HAP-1 (cell line): ENCODE measurements at regions of chr3 and their contacts with region 1.

Region 1: DNA sequence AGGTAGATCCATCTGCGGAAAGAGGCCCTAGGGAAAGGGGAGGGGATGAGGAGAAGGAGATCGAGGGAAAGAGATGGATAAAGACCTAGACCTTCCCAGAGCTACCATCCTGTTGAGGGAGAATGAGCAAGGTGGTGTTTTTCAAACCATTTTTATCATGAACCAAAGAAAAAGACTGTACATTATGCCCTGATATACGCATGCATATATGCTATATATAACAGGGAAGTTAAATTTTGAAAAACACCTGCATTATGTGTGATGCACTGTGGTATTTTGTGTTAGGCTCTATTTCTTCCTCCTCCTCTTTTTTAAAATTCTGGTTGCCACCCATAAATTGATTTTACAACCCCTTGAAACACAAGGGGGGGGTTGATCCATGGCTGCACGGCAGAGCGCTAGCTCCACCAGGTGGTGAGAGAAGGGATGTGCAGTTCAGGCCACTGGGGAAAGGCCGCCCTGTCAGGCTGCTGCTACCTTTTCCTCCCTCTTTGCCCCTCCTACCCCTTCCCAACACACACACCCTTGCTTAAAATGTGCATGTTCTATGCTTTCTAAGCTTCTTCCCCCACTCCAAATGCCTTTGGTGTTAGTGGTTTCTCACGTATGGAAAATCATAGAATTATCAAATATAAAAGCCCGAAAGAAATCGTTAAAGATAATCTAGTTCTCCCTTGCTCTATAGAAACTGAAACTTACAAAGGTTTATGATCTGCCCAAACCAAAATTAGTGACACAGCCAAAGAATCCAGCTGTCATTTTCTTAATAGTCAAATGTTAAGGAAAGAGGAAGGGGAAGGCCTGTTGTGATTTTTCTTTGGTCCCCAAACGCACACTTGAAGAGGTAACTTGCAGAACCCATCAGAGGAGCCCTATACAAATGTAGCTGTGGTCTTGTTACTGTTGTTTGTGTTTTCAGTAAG is 262.0 kb upstream of the UMPS start:
- DNase-seq: peak; percentile 41 to 72
- H3K4me3 ChIP-seq: no peak overlapping the region
- H3K4me1 ChIP-seq: no peaks in the 10 kb centered on the region
- H3K27me3 ChIP-seq: peaks cover 42% of the 10 kb centered on the region

Region 2: GRCh38 chr3:123169492-123169929 is 1298.7 kb before region 1 on chr3:
- in situ Hi-C with region 1: no loop called
- DNase-seq: no peak
- H3K4me3 ChIP-seq: no peak overlapping the region
- H3K4me1 ChIP-seq: no peaks in the 10 kb centered on the region
- H3K27me3 ChIP-seq: no peaks in the 10 kb centered on the region

Region 3: GRCh38 chr3:124007186-124007585 is 461.1 kb before region 1 on chr3:
- in situ Hi-C with region 1: loop called (anchors 25 kb)
- DNase-seq: no peak
- H3K4me3 ChIP-seq: no peak overlapping the region
- H3K4me1 ChIP-seq: no peaks in the 10 kb centered on the region; the same call in 1 of the 2 replicates
- H3K27me3 ChIP-seq: peaks cover 8% of the 10 kb centered on the region

Region 4: GRCh38 chr3:124117486-124117885 is 350.8 kb before region 1 on chr3:
- in situ Hi-C with region 1: no loop called
- DNase-seq: no peak
- H3K4me3 ChIP-seq: no peak overlapping the region
- H3K4me1 ChIP-seq: no peaks in the 10 kb centered on the region
- H3K27me3 ChIP-seq: peaks cover 3% of the 10 kb centered on the region; the same call in 1 of the 2 replicates

Region 5: GRCh38 chr3:124347418-124347817 is 120.8 kb before region 1 on chr3:
- in situ Hi-C with region 1: loop called (anchors 5 kb)
- DNase-seq: no peak
- H3K4me3 ChIP-seq: no peak overlapping the region
- H3K4me1 ChIP-seq: no peaks in the 10 kb centered on the region; the same call in 1 of the 2 replicates
- H3K27me3 ChIP-seq: peaks cover 8% of the 10 kb centered on the region

Region 6: GRCh38 chr3:125098611-125099291 is 630.5 kb after region 1 on chr3:
- in situ Hi-C with region 1: no loop called
- DNase-seq: no peak
- H3K4me3 ChIP-seq: no peak overlapping the region
- H3K4me1 ChIP-seq: no peaks in the 10 kb centered on the region
- H3K27me3 ChIP-seq: no peaks in the 10 kb centered on the region